ENCODE measurements at regions of chr14 and their contacts with region 1.

Region 1: GRCh38 chr14:51780006-51780692 is 80.3 kb upstream of the GNG2 start:
- DNase-seq: peak; percentile 37 to 69
- ATAC-seq: peak; percentile 54 to 81 (median 68)
- H3K4me3 ChIP-seq: no peak overlapping the region
- H3K27ac ChIP-seq: no peak overlapping the region
- H3K4me1 ChIP-seq: peaks cover 0 to 19% (median 7%) of the 10 kb centered on the region in 9 donors
- H3K27me3 ChIP-seq: peaks cover 0 to 6% (median 0%) of the 10 kb centered on the region in 7 donors
- CTCF ChIP-seq: peak; percentile 74 to 89 (median 87)

Region 2: GRCh38 chr14:50954811-50955372 is 825.3 kb before region 1 on chr14:
- intact Hi-C with region 1: loop called in 2 of 10 experiments (anchors 10 kb)
- DNase-seq: no peak
- ATAC-seq: peak in 7 of 8 donors; percentile 50 to 87 (median 75)
- H3K4me3 ChIP-seq: no peak overlapping the region
- H3K27ac ChIP-seq: peak overlapping the region in 4 of 10 donors; percentile 13 to 85 (median 26)
- H3K4me1 ChIP-seq: peaks cover 0 to 27% (median 0%) of the 10 kb centered on the region in 9 donors
- H3K27me3 ChIP-seq: no peaks in the 10 kb centered on the region
- CTCF ChIP-seq: peak; percentile 19 to 75 (median 64)

Region 3: DNA sequence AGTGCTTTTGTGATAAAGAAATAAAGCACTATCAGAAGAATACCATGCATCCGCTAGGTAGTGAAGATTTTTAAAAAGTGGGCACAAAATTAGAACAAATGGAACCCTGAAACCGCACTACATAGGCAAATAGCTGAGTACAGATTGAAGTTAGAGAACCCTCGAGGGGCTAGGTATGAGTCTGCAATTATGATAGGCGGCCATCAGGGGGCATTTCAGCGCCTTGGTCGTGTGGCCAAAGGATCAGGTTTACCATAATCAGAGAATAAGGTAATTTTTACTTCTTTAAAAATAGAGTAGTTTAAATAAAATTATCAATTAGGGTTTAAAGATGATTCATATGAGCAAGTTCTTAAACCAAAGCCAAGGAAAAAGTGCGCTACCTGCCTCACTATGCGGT is 410.3 kb before region 1 on chr14:
- intact Hi-C with region 1: loop called in 1 of 10 experiments (anchors 10 kb)
- DNase-seq: no peak
- ATAC-seq: no peak
- H3K4me3 ChIP-seq: no peak overlapping the region
- H3K27ac ChIP-seq: peak overlapping the region in 2 of 10 donors; percentile 54 to 60
- H3K4me1 ChIP-seq: no peaks in the 10 kb centered on the region
- H3K27me3 ChIP-seq: no peaks in the 10 kb centered on the region
- CTCF ChIP-seq: peak in 6 of 9 donors; percentile 13 to 52 (median 27)

Region 4: DNA sequence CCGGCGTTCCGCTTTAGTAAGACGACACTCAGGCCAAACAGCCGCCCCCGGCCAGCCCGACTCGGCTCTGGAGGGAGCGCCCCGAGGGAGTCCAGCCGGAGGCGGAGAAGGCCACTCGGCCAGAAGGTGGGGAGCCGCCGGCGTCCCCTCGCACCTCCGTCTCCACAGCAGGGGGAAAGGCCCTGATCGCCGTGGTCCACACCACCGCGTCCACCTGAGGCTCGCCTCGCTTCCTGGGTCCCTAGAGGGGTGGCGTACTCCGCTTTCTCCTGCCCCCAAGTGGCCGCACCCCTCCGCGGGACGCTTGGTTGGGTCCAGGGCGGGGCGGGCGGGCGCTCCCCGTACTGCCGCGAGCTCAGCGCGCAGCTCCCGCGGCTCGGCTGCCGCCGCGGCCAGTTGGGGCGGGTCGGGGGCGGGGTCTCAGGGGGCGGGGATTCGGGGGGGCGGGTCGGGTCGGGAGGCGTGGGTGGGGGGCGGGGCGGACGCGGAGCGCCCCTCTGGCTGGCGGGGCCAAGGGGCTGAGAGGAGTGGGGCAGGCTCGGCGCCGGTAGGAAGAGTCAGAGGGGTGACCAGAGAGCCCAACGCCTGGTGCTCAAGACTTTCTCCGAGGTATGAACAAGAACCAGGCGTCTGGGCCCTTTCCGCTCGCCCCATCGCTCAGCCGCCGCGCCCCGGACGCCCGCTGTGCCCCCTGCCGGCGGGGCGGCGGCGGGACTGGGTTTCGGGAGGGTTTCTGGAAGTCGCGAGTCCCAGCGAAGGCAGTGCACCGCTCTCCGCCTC is 128.6 kb before region 1 on chr14 and contains the start of gene FRMD6:
- intact Hi-C with region 1: loop called in 5 of 10 experiments (anchors 2 to 10 kb)
- DNase-seq: peak; percentile 89 to 92
- ATAC-seq: peak; percentile 91 to 98 (median 92)
- H3K4me3 ChIP-seq: peak within 1 kb of the TSS; percentile 73 to 98 (median 89)
- H3K27ac ChIP-seq: peak within 1 kb of the TSS; percentile 90 to 99 (median 97)
- H3K4me1 ChIP-seq: peaks cover 0 to 44% (median 11%) of the 10 kb centered on the region in 9 donors
- H3K27me3 ChIP-seq: peaks cover 0 to 29% (median 0%) of the 10 kb centered on the region in 7 donors
- CTCF ChIP-seq: peak; percentile 61 to 88 (median 79)
- total RNA-seq, gene FRMD6: 5.9 to 14.2 (median 6.9) TPM

Region 5: GRCh38 chr14:51979088-51979709 is 199.1 kb after region 1 on chr14:
- intact Hi-C with region 1: loop called in 7 of 10 experiments (anchors 2 to 10 kb)
- DNase-seq: peak; percentile 76 to 83
- ATAC-seq: peak; percentile 75 to 85 (median 78)
- H3K4me3 ChIP-seq: no peak overlapping the region
- H3K27ac ChIP-seq: peak overlapping the region in 5 of 10 donors; percentile 24 to 61 (median 41)
- H3K4me1 ChIP-seq: peaks cover 0 to 17% (median 0%) of the 10 kb centered on the region in 9 donors
- H3K27me3 ChIP-seq: no peaks in the 10 kb centered on the region
- CTCF ChIP-seq: peak; percentile 86 to 96 (median 95)

Measured in heart right ventricle (tissue), 16 donors.